ENCODE measurements at regions of chr4 and their contacts with region 1.

Region 1: DNA sequence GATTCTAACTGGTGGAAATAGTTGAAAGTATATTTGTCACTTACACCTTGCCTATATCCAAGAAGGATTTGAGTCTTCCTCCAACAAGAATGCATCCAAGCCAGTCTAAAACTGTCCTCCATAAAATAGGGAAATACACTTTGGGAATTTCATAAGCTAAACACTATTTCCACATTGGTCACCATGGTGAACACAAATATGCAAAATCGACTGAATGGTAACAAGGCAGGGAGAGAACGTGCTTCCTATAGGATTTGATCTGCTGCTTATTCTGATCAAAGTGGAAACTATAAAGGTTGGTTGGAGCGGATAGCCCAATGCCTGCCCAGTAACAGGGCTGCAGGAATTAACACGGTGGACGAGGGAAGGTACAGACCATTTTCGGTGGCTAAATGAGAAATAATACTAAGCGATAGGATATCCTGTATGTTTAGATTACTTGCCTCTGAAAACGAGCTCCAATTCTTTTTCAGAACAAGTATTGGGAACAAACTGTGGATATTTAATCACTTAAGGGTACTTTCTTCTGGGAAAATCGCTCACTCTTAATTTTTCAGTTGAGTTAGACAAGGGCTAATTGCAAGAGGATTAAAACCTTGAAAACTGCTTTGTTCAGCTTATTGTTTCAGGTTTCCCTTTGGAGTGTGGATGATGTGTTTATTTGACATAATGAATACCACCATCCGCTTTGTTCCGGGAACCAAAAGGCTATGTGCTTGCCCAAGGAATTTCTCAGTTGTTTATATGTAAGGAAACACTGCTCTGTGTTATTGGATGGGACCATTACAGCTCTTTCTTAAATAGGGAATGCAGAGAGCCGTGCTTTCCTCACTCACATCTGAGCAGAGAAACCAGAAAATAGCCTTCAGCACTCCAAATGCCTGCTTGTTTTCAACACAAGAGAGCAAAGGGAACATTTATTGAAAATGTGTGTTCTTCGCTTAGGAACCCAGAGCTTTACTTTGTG is 194.4 kb downstream of the CBR4 start:
- DNase-seq: no peak
- H3K4me3 ChIP-seq: no peak overlapping the region
- H3K27ac ChIP-seq: no peak overlapping the region
- H3K4me1 ChIP-seq: 0 out of 2 replicates have a peak, but pooled peaks cover 3% of the 10 kb centered on the region
- H3K27me3 ChIP-seq: no peaks in the 10 kb centered on the region
- CTCF ChIP-seq: no peak

Region 2: GRCh38 chr4:168451744-168452390 is 363.8 kb before region 1 on chr4:
- CTCF ChIA-PET with region 1: no interaction called
- POLR2A ChIA-PET with region 1: interaction called, 17 read pairs
- intact Hi-C with region 1: no loop called
- DNase-seq: peak in 1 of 2 experiments; percentile 64
- H3K4me3 ChIP-seq: no peak overlapping the region
- H3K27ac ChIP-seq: no peak overlapping the region
- H3K4me1 ChIP-seq: peaks cover 15% of the 10 kb centered on the region
- H3K27me3 ChIP-seq: no peaks in the 10 kb centered on the region
- CTCF ChIP-seq: no peak

Region 3: GRCh38 chr4:168486961-168487305 is 328.7 kb before region 1 on chr4:
- CTCF ChIA-PET with region 1: no interaction called
- POLR2A ChIA-PET with region 1: interaction called, 10 read pairs
- intact Hi-C with region 1: no loop called
- DNase-seq: peak in 1 of 2 experiments; percentile 78
- H3K4me3 ChIP-seq: peak overlapping the region; percentile 23; the same call in 1 of the 2 replicates
- H3K27ac ChIP-seq: peak overlapping the region; percentile 92
- H3K4me1 ChIP-seq: peaks cover 55% of the 10 kb centered on the region
- H3K27me3 ChIP-seq: no peaks in the 10 kb centered on the region
- CTCF ChIP-seq: no peak

Region 4: GRCh38 chr4:168514249-168514852 is 301.3 kb before region 1 on chr4:
- CTCF ChIA-PET with region 1: no interaction called
- POLR2A ChIA-PET with region 1: no interaction called
- intact Hi-C with region 1: loop called (anchors 10 kb)
- DNase-seq: peak in 1 of 2 experiments; percentile 43
- H3K4me3 ChIP-seq: no peak overlapping the region
- H3K27ac ChIP-seq: no peak overlapping the region
- H3K4me1 ChIP-seq: no peaks in the 10 kb centered on the region
- H3K27me3 ChIP-seq: no peaks in the 10 kb centered on the region
- CTCF ChIP-seq: peak; percentile 67

Region 5: DNA sequence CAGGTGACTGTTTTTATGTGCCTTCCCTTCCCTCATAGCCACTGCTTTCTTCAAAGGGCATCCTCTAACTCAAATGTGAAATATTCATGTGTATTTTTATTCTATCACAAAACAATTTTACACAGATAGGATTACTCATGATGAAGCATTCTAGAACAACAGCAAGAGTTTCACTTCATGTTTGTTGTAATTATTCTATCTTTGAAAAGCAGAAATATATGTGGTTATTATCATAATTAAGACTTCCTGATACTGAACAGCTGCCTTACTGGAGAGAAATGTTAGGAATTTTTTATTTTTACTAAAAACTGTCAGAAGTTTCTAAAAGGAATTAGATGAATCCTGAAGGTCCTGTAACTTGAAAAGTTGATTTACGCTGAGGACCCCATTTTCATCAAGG is 89.7 kb before region 1 on chr4:
- CTCF ChIA-PET with region 1: no interaction called
- POLR2A ChIA-PET with region 1: no interaction called
- intact Hi-C with region 1: no loop called
- DNase-seq: no peak
- H3K4me3 ChIP-seq: no peak overlapping the region
- H3K27ac ChIP-seq: no peak overlapping the region
- H3K4me1 ChIP-seq: no peaks in the 10 kb centered on the region
- H3K27me3 ChIP-seq: no peaks in the 10 kb centered on the region
- CTCF ChIP-seq: no peak

Region 6: GRCh38 chr4:168765726-168766125 is 49.9 kb before region 1 on chr4:
- CTCF ChIA-PET with region 1: no interaction called
- POLR2A ChIA-PET with region 1: interaction called, 4 read pairs
- intact Hi-C with region 1: loop called (anchors 1 kb)
- DNase-seq: peak in 1 of 2 experiments; percentile 73
- H3K4me3 ChIP-seq: no peak overlapping the region
- H3K27ac ChIP-seq: no peak overlapping the region
- H3K4me1 ChIP-seq: no peaks in the 10 kb centered on the region
- H3K27me3 ChIP-seq: no peaks in the 10 kb centered on the region
- CTCF ChIP-seq: no peak

Region 7: DNA sequence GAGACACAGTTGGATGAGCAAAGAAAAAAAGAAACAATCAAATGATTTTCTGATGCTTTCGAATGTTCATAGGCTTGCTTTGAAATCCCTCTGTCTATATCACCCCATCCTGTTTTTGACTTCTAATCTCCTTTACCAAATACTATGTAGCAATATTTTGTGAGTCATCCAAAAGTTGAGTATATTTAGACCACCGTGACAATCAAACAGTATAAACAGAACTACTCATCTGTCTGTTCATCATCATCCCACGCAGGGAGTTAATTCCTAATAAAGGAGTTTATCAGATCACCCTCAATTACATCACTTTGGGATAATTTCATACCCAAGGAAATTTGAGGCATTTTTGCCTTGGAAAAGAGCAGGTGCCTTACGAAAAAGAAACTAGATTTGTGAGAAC is 18.5 kb before region 1 on chr4:
- CTCF ChIA-PET with region 1: no interaction called
- POLR2A ChIA-PET with region 1: interaction called, 3 read pairs
- intact Hi-C with region 1: loop called (anchors 2 kb)
- DNase-seq: peak in 1 of 2 experiments; percentile 62
- H3K4me3 ChIP-seq: no peak overlapping the region; the same call in 1 of the 2 replicates
- H3K27ac ChIP-seq: peak overlapping the region; percentile 56
- H3K4me1 ChIP-seq: peaks cover 25% of the 10 kb centered on the region
- H3K27me3 ChIP-seq: no peaks in the 10 kb centered on the region
- CTCF ChIP-seq: no peak

Region 8: DNA sequence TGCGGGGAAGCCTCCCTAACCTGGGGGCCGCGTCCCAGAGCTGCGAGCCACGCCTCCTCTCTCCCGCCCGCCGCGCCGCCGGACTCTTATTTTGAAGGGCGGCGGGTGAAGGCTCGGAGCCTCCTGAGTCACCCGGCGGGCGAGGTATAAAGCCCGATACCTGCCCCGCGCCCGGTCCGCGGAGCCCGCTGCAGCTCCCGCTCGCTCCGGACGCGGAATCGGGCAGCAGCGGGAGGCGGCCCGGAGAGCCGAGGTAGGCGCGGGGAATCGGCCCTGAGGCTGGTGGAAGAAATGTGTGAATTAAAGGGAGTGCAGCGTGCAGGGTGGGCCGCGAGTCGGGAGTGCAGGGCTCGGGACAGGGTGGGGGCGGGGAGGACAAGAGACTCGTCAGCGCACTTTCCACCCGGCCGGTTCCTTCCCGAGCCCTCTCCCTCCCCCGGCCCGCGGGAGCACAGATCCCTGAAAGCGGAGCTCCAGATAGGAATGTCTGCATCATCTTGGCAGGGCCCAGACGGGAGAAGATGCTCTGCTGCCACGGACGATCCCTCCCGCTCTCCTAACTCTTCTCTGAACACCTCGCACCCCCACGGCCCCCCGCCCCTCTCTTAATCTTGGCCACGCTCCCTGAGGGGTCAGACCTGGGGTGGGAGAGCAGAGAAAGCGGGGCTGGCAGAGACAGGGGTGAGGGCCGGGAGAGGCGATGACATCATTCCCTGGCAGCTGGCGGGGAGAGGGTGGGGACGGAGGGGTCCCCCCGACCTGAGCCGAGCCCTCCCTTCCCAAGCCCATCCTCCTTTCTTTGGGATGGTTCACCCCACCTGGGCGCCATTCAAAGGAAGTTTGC is 16.5 kb after region 1 on chr4:
- CTCF ChIA-PET with region 1: no interaction called
- POLR2A ChIA-PET with region 1: interaction called, 25 read pairs
- intact Hi-C with region 1: loop called (anchors 1 kb)
- DNase-seq: peak; percentile 55 to 83
- H3K4me3 ChIP-seq: peak overlapping the region; percentile 78
- H3K27ac ChIP-seq: 0 out of 2 replicates have a peak overlapping the region, but pooled peaks have one; percentile 37
- H3K4me1 ChIP-seq: peaks cover 8% of the 10 kb centered on the region; the same call in 1 of the 2 replicates
- H3K27me3 ChIP-seq: no peaks in the 10 kb centered on the region
- CTCF ChIP-seq: no peak

Measured in PC-9 (cell line).